Caco-2 (cell line): ENCODE measurements at regions of chr9 and their contacts with region 1.

Region 1: GRCh38 chr9:74773886-74774479 is 113.7 kb downstream of the TRPM6 start:
- DNase-seq: peak; percentile 35 to 37
- H3K4me3 ChIP-seq: no peak overlapping the region
- H3K4me3 Mint-ChIP-seq: no peak overlapping the region
- H3K27ac Mint-ChIP-seq: no peak overlapping the region
- H3K4me1 ChIP-seq: no peaks in the 10 kb centered on the region
- H3K4me1 Mint-ChIP-seq: no peaks in the 10 kb centered on the region
- H3K27me3 ChIP-seq: no peaks in the 10 kb centered on the region
- H3K27me3 Mint-ChIP-seq: no peaks in the 10 kb centered on the region
- CTCF ChIP-seq: peak; percentile 34

Region 2: DNA sequence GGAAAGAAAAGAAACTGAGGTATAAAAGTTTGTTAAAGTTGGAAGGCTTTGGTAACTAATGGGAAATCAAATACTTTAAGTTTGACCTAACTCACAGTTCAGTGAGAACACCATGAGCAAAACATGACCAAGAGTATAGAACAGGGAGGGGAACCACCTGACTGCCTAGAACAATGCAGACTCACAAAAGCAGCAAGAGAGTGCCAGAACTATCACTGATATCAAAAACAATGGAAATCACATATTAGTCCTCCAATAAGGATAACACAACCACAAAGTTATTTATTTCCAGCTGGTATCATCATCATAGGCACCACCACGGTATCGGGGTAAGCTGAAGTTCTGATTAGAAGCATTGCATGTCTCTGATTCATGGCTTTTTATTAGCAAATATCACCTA is 36.2 kb after region 1 on chr9:
- CTCF ChIA-PET with region 1: no interaction called
- POLR2A ChIA-PET with region 1: no interaction called
- intact Hi-C with region 1: no loop called
- DNase-seq: no peak
- H3K4me3 ChIP-seq: no peak overlapping the region
- H3K4me3 Mint-ChIP-seq: no peak overlapping the region
- H3K27ac Mint-ChIP-seq: no peak overlapping the region
- H3K4me1 ChIP-seq: no peaks in the 10 kb centered on the region
- H3K4me1 Mint-ChIP-seq: no peaks in the 10 kb centered on the region
- H3K27me3 ChIP-seq: no peaks in the 10 kb centered on the region
- H3K27me3 Mint-ChIP-seq: no peaks in the 10 kb centered on the region
- CTCF ChIP-seq: no peak

Region 3: GRCh38 chr9:74940600-74940999 is 166.6 kb after region 1 on chr9:
- CTCF ChIA-PET with region 1: interaction called, 6 read pairs
- POLR2A ChIA-PET with region 1: no interaction called
- intact Hi-C with region 1: loop called (anchors 1 kb)
- DNase-seq: peak; percentile 38 to 43
- H3K4me3 ChIP-seq: no peak overlapping the region
- H3K4me3 Mint-ChIP-seq: no peak overlapping the region
- H3K27ac Mint-ChIP-seq: no peak overlapping the region
- H3K4me1 ChIP-seq: no peaks in the 10 kb centered on the region
- H3K4me1 Mint-ChIP-seq: no peaks in the 10 kb centered on the region
- H3K27me3 ChIP-seq: no peaks in the 10 kb centered on the region
- H3K27me3 Mint-ChIP-seq: no peaks in the 10 kb centered on the region
- CTCF ChIP-seq: peak in 1 of 2 experiments; percentile 47

Region 4: GRCh38 chr9:75071530-75072124 is 297.6 kb after region 1 on chr9:
- CTCF ChIA-PET with region 1: no interaction called
- POLR2A ChIA-PET with region 1: no interaction called
- intact Hi-C with region 1: loop called (anchors 2 kb)
- DNase-seq: no peak
- H3K4me3 ChIP-seq: no peak overlapping the region
- H3K4me3 Mint-ChIP-seq: no peak overlapping the region
- H3K27ac Mint-ChIP-seq: no peak overlapping the region
- H3K4me1 ChIP-seq: no peaks in the 10 kb centered on the region
- H3K4me1 Mint-ChIP-seq: no peaks in the 10 kb centered on the region
- H3K27me3 ChIP-seq: no peaks in the 10 kb centered on the region
- H3K27me3 Mint-ChIP-seq: no peaks in the 10 kb centered on the region
- CTCF ChIP-seq: no peak